CD4-positive, alpha-beta memory T cell (primary cell): ENCODE measurements at regions of chr2 and their contacts with region 1.

Region 1: GRCh38 chr2:161223139-161223732 is 63.0 kb downstream of the TANK start:
- DNase-seq: peak; percentile 29 to 57 (median 52)
- H3K4me3 ChIP-seq: no peak overlapping the region
- H3K4me3 Mint-ChIP-seq: no peak overlapping the region
- H3K27ac ChIP-seq: no peak overlapping the region
- H3K27ac Mint-ChIP-seq: no peak overlapping the region
- H3K4me1 ChIP-seq: no peaks in the 10 kb centered on the region
- H3K4me1 Mint-ChIP-seq: peaks cover 0 to 6% (median 4%) of the 10 kb centered on the region in 4 donors
- H3K27me3 ChIP-seq: no peaks in the 10 kb centered on the region
- H3K27me3 Mint-ChIP-seq: no peaks in the 10 kb centered on the region

Region 2: DNA sequence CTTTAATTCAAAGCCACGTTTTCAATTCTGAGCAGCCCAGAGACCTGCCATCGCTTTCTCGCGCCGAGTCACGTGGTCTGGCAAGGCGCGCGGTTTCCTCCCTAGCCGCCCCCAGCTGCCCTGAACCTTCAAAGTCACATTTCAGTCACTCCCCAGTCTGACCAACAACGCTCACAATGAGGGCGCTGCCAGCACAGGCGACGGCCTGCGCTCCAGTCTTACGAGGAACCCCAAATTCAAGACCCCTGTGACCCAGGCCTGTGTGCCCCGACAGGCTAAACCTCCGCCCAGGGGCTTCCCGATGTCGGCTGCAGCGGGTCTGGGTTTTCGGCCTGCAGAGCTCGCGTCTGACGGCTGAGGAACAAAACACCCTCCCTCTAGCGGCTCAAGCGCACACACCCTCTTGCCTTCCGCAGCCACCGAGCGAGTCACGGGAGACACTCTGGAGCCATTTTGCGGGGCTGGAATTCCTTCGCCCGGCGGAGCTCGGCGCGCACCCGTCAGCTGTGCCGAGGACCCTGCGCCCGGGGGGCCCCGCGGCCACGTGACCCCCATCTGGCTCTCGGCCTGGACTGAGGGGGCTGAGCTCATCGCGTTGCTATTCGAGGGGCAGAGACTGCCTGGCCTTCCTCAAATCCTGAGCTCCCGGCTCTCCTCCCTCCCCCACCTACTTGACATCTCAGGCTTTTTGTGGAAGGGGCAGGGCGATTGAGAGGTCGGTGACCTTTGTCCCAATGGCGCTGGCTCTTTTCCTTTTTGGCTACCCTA is 953.2 kb before region 1 on chr2:
- CTCF ChIA-PET with region 1: no interaction called
- POLR2A ChIA-PET with region 1: no interaction called
- intact Hi-C with region 1: no loop called
- DNase-seq: peak; percentile 64 to 75 (median 69)
- H3K4me3 ChIP-seq: peak overlapping the region; percentile 30 to 59
- H3K4me3 Mint-ChIP-seq: peak overlapping the region; percentile 81 to 90 (median 87)
- H3K27ac ChIP-seq: peak overlapping the region; percentile 64
- H3K27ac Mint-ChIP-seq: peak overlapping the region; percentile 91 to 97 (median 94)
- H3K4me1 ChIP-seq: peaks cover 29% of the 10 kb centered on the region
- H3K4me1 Mint-ChIP-seq: peaks cover 20 to 48% (median 32%) of the 10 kb centered on the region in 4 donors
- H3K27me3 ChIP-seq: no peaks in the 10 kb centered on the region
- H3K27me3 Mint-ChIP-seq: no peaks in the 10 kb centered on the region

Region 3: GRCh38 chr2:161004379-161004778 is 218.9 kb before region 1 on chr2:
- CTCF ChIA-PET with region 1: no interaction called
- POLR2A ChIA-PET with region 1: no interaction called
- intact Hi-C with region 1: no loop called
- DNase-seq: no peak
- H3K4me3 ChIP-seq: no peak overlapping the region
- H3K4me3 Mint-ChIP-seq: no peak overlapping the region
- H3K27ac ChIP-seq: no peak overlapping the region
- H3K27ac Mint-ChIP-seq: no peak overlapping the region
- H3K4me1 ChIP-seq: no peaks in the 10 kb centered on the region
- H3K4me1 Mint-ChIP-seq: no peaks in the 10 kb centered on the region
- H3K27me3 ChIP-seq: no peaks in the 10 kb centered on the region
- H3K27me3 Mint-ChIP-seq: peaks cover 6 to 19% of the 10 kb centered on the region in 2 donors

Region 4: DNA sequence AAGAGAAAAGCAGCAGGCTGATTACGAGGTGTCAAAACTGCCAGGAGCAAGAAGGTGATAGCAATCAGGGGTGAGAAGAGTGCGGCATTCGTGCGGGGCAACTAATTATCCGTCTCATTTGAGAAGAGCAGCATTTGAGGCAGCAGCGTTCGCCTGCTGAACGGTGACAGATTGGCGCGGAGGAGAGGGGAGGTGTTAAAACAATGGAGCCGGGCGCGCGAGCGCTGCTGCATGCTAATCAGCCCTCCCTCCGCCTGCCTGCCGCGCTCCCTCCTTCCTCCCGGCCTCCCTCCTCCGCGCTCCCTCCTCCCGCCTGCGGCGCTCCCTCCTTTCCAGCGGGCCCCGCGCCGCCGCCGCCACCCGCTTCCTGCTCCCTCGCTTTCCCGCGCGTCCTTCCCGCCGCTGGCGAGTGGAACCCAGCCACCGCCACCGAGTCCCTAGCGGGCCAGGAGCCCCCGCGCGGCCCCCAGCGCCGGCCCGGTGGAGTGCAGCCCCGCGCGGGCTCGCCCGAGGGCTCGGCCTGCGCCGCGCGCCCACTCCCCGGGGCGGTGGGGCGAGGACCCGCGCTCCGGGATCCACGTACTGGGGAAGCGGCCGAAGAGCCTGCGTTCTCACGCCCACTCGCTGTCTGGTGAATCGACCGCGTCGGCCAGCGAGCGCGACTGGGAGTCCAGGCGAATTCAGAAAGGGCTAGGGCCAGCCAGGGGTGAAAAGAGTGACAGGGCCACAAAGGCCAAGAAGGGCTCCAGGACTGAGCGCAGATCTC is 15.5 kb after region 1 on chr2:
- CTCF ChIA-PET with region 1: interaction called, 28 read pairs
- POLR2A ChIA-PET with region 1: interaction called, 11 read pairs
- intact Hi-C with region 1: loop called (anchors 2 kb)
- DNase-seq: peak; percentile 59 to 75 (median 64)
- H3K4me3 ChIP-seq: peak overlapping the region in 1 of 2 donors; percentile 75
- H3K4me3 Mint-ChIP-seq: peak overlapping the region; percentile 88 to 99 (median 94)
- H3K27ac ChIP-seq: peak overlapping the region; percentile 44
- H3K27ac Mint-ChIP-seq: peak overlapping the region; percentile 70 to 97 (median 95)
- H3K4me1 ChIP-seq: peaks cover 48% of the 10 kb centered on the region
- H3K4me1 Mint-ChIP-seq: peaks cover 32 to 73% (median 46%) of the 10 kb centered on the region in 4 donors
- H3K27me3 ChIP-seq: no peaks in the 10 kb centered on the region
- H3K27me3 Mint-ChIP-seq: no peaks in the 10 kb centered on the region

Region 5: DNA sequence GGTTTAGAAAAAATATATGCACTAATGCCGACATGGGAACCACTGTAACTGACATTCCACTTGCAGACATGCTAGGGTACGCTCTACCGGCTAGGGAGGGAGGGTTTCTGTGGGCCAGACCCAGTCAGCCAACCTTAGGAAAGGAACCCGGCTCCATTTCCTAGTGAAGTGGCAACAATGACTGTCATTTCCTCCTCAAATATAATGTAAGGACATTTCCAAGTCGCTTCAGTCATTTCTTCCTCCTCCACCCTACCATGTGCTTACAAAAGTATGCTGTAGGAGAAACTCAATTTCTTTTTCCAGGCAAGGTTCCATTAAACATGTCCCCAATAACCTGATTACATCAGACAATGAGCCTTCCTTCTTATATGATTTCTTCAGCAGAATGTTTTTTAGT is 20.7 kb after region 1 on chr2:
- CTCF ChIA-PET with region 1: interaction called, 17 read pairs
- POLR2A ChIA-PET with region 1: interaction called, 8 read pairs
- intact Hi-C with region 1: loop called (anchors 1 kb)
- DNase-seq: peak in 2 of 5 donors; percentile 11 to 44
- H3K4me3 ChIP-seq: peak overlapping the region; percentile 33 to 36
- H3K4me3 Mint-ChIP-seq: peak overlapping the region; percentile 84 to 96 (median 90)
- H3K27ac ChIP-seq: peak overlapping the region; percentile 78
- H3K27ac Mint-ChIP-seq: peak overlapping the region; percentile 84 to 98 (median 96)
- H3K4me1 ChIP-seq: peaks cover 46% of the 10 kb centered on the region
- H3K4me1 Mint-ChIP-seq: peaks cover 39 to 73% (median 61%) of the 10 kb centered on the region in 4 donors
- H3K27me3 ChIP-seq: no peaks in the 10 kb centered on the region
- H3K27me3 Mint-ChIP-seq: no peaks in the 10 kb centered on the region

Region 6: GRCh38 chr2:161250864-161251436 is 27.7 kb after region 1 on chr2:
- CTCF ChIA-PET with region 1: interaction called, 15 read pairs
- POLR2A ChIA-PET with region 1: no interaction called
- intact Hi-C with region 1: loop called (anchors 1 kb)
- DNase-seq: peak in 4 of 5 donors; percentile 11 to 50 (median 24)
- H3K4me3 ChIP-seq: no peak overlapping the region
- H3K4me3 Mint-ChIP-seq: no peak overlapping the region
- H3K27ac ChIP-seq: no peak overlapping the region
- H3K27ac Mint-ChIP-seq: peak overlapping the region in 2 of 7 donors; percentile 4 to 53
- H3K4me1 ChIP-seq: peaks cover 5% of the 10 kb centered on the region
- H3K4me1 Mint-ChIP-seq: peaks cover 10 to 28% (median 20%) of the 10 kb centered on the region in 4 donors
- H3K27me3 ChIP-seq: no peaks in the 10 kb centered on the region
- H3K27me3 Mint-ChIP-seq: no peaks in the 10 kb centered on the region

Region 7: GRCh38 chr2:161265874-161266273 is 42.6 kb after region 1 on chr2:
- CTCF ChIA-PET with region 1: interaction called, 19 read pairs
- POLR2A ChIA-PET with region 1: no interaction called
- intact Hi-C with region 1: no loop called
- DNase-seq: no peak
- H3K4me3 ChIP-seq: no peak overlapping the region
- H3K4me3 Mint-ChIP-seq: no peak overlapping the region
- H3K27ac ChIP-seq: no peak overlapping the region
- H3K27ac Mint-ChIP-seq: no peak overlapping the region
- H3K4me1 ChIP-seq: no peaks in the 10 kb centered on the region
- H3K4me1 Mint-ChIP-seq: no peaks in the 10 kb centered on the region
- H3K27me3 ChIP-seq: no peaks in the 10 kb centered on the region
- H3K27me3 Mint-ChIP-seq: peaks cover 0 to 3% of the 10 kb centered on the region in 2 donors

Region 8: GRCh38 chr2:161273038-161273760 is 50.0 kb after region 1 on chr2:
- CTCF ChIA-PET with region 1: interaction called, 103 read pairs
- POLR2A ChIA-PET with region 1: no interaction called
- intact Hi-C with region 1: loop called (anchors 1 kb)
- DNase-seq: peak; percentile 39 to 65 (median 58)
- H3K4me3 ChIP-seq: no peak overlapping the region
- H3K4me3 Mint-ChIP-seq: no peak overlapping the region
- H3K27ac ChIP-seq: no peak overlapping the region
- H3K27ac Mint-ChIP-seq: no peak overlapping the region
- H3K4me1 ChIP-seq: no peaks in the 10 kb centered on the region
- H3K4me1 Mint-ChIP-seq: peaks cover 0 to 4% (median 2%) of the 10 kb centered on the region in 4 donors
- H3K27me3 ChIP-seq: no peaks in the 10 kb centered on the region
- H3K27me3 Mint-ChIP-seq: peaks cover 1 to 4% of the 10 kb centered on the region in 2 donors

Region 9: GRCh38 chr2:161946489-161947107 is 723.4 kb after region 1 on chr2:
- CTCF ChIA-PET with region 1: interaction called, 9 read pairs
- POLR2A ChIA-PET with region 1: no interaction called
- intact Hi-C with region 1: loop called (anchors 1 kb)
- DNase-seq: peak in 4 of 5 donors; percentile 15 to 31 (median 22)
- H3K4me3 ChIP-seq: no peak overlapping the region
- H3K4me3 Mint-ChIP-seq: no peak overlapping the region
- H3K27ac ChIP-seq: no peak overlapping the region
- H3K27ac Mint-ChIP-seq: no peak overlapping the region
- H3K4me1 ChIP-seq: peaks cover 12% of the 10 kb centered on the region
- H3K4me1 Mint-ChIP-seq: peaks cover 4 to 5% (median 5%) of the 10 kb centered on the region in 4 donors
- H3K27me3 ChIP-seq: peaks cover 3% of the 10 kb centered on the region
- H3K27me3 Mint-ChIP-seq: no peaks in the 10 kb centered on the region

Region 10: DNA sequence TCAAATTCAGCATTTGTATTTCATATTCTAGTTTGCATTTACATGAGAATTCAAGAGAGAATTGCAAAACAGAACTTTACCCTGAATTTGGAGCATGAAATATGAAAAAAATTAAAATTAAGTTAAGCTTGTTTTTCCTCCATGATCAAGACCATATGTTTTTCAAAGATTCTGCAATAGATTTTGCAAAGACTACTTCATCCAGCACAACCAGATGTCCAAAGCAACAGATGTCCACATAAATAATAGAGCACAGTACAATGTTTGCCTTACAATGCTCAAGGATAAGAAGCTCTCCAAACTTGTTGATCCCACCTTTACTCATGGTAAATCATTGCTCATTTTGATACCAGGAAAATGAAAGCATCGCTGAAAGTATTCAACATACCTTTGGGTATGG is 994.4 kb after region 1 on chr2:
- CTCF ChIA-PET with region 1: no interaction called
- POLR2A ChIA-PET with region 1: no interaction called
- intact Hi-C with region 1: no loop called
- DNase-seq: no peak
- H3K4me3 ChIP-seq: no peak overlapping the region
- H3K4me3 Mint-ChIP-seq: no peak overlapping the region
- H3K27ac ChIP-seq: no peak overlapping the region
- H3K27ac Mint-ChIP-seq: no peak overlapping the region
- H3K4me1 ChIP-seq: no peaks in the 10 kb centered on the region
- H3K4me1 Mint-ChIP-seq: peaks cover 0 to 5% (median 1%) of the 10 kb centered on the region in 4 donors
- H3K27me3 ChIP-seq: no peaks in the 10 kb centered on the region
- H3K27me3 Mint-ChIP-seq: peaks cover 10 to 19% of the 10 kb centered on the region in 2 donors